A549 (cell line): ENCODE measurements at regions of chr3 and their contacts with region 1.

Region 1: GRCh38 chr3:107271787-107272387 is 105.4 kb upstream of the CCDC54 start:
- DNase-seq: peak; percentile 21 to 41
- ATAC-seq: peak; percentile 87 to 91
- H3K4me3 ChIP-seq: no peak overlapping the region
- H3K27ac ChIP-seq: no peak overlapping the region
- H3K4me1 ChIP-seq: no peaks in the 10 kb centered on the region
- CTCF ChIP-seq: peak; percentile 73
- EP300 ChIP-seq: no peak
- POLR2A ChIP-seq: no peak
- RAD21 ChIP-seq: peak; percentile 74 to 82

Region 2: DNA sequence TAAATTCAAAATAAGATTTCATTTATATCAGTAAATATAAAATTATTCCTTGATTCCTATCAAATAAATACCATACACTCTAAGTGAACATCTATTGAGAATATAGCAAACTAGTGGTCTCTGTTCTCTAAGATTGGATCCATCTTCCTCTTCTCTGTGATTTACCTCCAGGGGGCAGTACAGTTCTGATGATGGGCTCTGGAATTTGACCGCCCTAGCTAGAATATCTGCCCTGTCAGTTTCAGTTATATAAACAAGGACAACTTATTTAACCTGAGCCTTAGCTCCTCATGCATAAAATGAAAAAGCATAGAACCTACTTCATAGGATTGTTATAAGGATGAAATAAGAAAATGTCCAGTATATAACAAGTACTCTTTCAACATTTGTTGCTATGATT is 65.7 kb before region 1 on chr3:
- CTCF ChIA-PET with region 1: interaction called, 11 read pairs
- POLR2A ChIA-PET with region 1: no interaction called
- DNase-seq: peak; percentile 36 to 51
- ATAC-seq: peak in 1 of 2 experiments; percentile 85; a peak in 3 of 6 replicates
- H3K4me3 ChIP-seq: no peak overlapping the region
- H3K27ac ChIP-seq: no peak overlapping the region
- H3K4me1 ChIP-seq: peaks cover 29% of the 10 kb centered on the region
- CTCF ChIP-seq: peak; percentile 56
- EP300 ChIP-seq: no peak
- POLR2A ChIP-seq: no peak
- RAD21 ChIP-seq: peak; percentile 56 to 69; a peak in 4 of 5 replicates

Region 3: GRCh38 chr3:107284612-107285011 is 12.7 kb after region 1 on chr3:
- CTCF ChIA-PET with region 1: interaction called, 41 read pairs
- POLR2A ChIA-PET with region 1: no interaction called
- DNase-seq: no peak
- ATAC-seq: no peak
- H3K4me3 ChIP-seq: no peak overlapping the region
- H3K27ac ChIP-seq: peak overlapping the region in 1 of 2 experiments; percentile 42; a peak in 1 of 6 replicates
- H3K4me1 ChIP-seq: peaks cover 14% of the 10 kb centered on the region; the same call in 2 of the 3 replicates
- CTCF ChIP-seq: no peak
- EP300 ChIP-seq: no peak
- POLR2A ChIP-seq: no peak
- RAD21 ChIP-seq: no peak

Region 4: GRCh38 chr3:107416145-107416544 is 144.3 kb after region 1 on chr3:
- CTCF ChIA-PET with region 1: interaction called, 89 read pairs
- POLR2A ChIA-PET with region 1: interaction called, 3 read pairs
- DNase-seq: no peak
- ATAC-seq: no peak
- H3K4me3 ChIP-seq: no peak overlapping the region
- H3K27ac ChIP-seq: no peak overlapping the region
- H3K4me1 ChIP-seq: no peaks in the 10 kb centered on the region
- CTCF ChIP-seq: no peak
- EP300 ChIP-seq: no peak
- POLR2A ChIP-seq: no peak
- RAD21 ChIP-seq: no peak

Region 5: DNA sequence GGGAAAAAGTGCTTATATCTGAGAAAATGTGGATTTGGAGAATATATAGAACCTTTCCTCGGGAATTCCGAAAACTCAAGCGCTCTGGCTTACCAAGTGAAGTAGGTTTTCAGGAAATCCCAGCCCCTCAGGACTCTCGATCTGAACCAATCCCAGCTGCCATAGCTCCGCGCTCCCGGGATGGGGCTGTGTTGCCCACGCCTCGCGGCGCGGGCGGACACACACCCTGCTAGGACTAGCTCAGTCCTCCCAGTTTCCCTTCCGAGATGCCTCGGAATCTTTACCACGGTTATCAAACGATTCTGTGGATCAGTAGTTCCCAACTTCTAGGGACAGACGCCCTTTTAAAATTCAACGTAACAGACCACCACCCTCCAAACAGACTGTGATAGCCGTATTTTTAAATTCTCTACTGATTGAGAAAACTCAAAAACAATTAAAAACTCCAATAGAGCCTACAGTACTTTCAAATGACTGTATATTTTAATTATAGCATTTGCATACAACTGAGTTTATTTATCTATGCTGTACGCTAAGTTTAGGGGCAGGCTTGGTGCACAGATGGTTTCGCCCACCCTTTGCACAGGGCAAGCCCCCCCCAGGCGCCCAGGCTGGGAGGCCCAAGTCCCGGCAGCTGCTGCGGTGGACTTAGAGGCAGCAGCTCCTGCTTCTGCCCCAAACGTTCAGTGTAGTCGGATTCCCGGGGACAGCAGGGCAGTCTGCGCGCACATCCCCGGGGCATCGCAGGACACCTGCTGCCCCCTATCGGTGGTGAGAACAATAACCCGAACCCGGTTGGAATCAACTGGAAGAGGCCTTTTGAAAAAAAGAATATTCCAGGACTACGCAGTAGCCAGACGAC is 157.7 kb after region 1 on chr3:
- CTCF ChIA-PET with region 1: interaction called, 74 read pairs
- POLR2A ChIA-PET with region 1: interaction called, 41 read pairs
- DNase-seq: peak; percentile 80 to 92
- ATAC-seq: peak; percentile 69 to 87
- H3K4me3 ChIP-seq: peak overlapping the region; percentile 59
- H3K27ac ChIP-seq: peak overlapping the region; percentile 74 to 95
- H3K4me1 ChIP-seq: peaks cover 16% of the 10 kb centered on the region
- CTCF ChIP-seq: peak; percentile 85
- EP300 ChIP-seq: no peak
- POLR2A ChIP-seq: peak; percentile 50
- RAD21 ChIP-seq: peak; percentile 71